OCI-LY7 (cell line): ENCODE measurements at regions of chr5 and their contacts with region 1.

Region 1: GRCh38 chr5:7868773-7869473 is at the starts of genes FASTKD3 and MTRR:
- DNase-seq: peak; percentile 94
- H3K4me3 ChIP-seq: peak within 1 kb of the TSS; percentile 97
- H3K27ac ChIP-seq: peak within 1 kb of the TSS; percentile 55
- H3K4me1 ChIP-seq: peaks cover 64% of the 10 kb centered on the region
- CTCF ChIP-seq: no peak
- total RNA-seq, gene FASTKD3: 12.9 and 14.7 TPM in 2 replicates
- total RNA-seq, gene MTRR: 51.9 and 68.1 TPM in 2 replicates

Region 2: DNA sequence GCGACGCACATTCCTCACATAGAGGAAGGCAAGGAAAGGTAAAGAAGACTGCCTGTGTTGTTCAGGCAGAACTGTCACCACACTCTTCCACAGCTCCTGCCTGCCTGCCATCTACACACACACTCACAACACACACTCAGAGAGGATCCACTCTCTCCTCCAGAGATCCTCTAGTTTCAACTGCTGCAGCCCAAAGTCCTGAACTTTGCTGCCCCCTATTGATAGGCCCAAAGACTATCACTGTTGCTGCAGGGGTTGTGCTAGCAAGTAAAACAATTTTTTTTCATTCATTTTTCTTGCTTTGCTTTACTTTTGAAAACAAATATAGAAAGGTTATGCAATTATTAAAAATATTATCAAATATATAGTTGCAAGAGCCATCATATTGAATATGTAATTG is 12.1 kb before region 1 on chr5:
- CTCF ChIA-PET with region 1: no interaction called
- POLR2A ChIA-PET with region 1: interaction called, 16 read pairs
- intact Hi-C with region 1: no loop called
- DNase-seq: peak; percentile 24
- H3K4me3 ChIP-seq: no peak overlapping the region
- H3K27ac ChIP-seq: no peak overlapping the region
- H3K4me1 ChIP-seq: no peaks in the 10 kb centered on the region
- CTCF ChIP-seq: peak; percentile 72

Region 3: DNA sequence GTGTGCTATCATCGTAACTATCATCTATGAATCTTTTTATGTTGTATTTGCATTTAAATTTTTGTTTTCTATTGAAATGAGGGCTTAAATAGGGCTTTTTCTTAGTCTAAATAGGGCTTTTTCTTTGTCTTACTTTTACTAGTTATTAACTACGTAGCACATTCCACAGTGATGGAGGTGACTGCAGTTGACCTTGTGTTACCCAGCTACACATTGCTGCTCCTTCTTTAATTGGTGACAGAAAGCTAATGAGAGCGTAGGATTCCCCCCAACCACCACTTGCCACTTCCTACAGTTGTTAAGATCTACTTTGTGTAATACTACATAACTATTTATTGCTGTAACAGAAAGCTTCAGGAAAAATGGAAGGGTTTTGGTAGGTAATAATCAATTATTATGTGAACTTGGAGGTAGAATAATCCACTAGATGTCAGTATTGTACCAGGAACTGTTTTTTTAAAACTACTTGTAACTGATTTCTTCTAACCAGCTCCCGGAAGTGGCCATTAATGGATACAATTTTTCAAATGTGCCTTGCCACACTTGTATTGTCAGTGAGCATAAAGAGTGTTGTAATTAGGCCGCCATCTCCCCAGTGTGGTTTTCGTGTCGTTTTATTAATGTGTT is 18.0 kb after region 1 on chr5:
- CTCF ChIA-PET with region 1: interaction called, 8 read pairs
- POLR2A ChIA-PET with region 1: interaction called, 15 read pairs
- intact Hi-C with region 1: no loop called
- DNase-seq: peak; percentile 41
- H3K4me3 ChIP-seq: no peak overlapping the region
- H3K27ac ChIP-seq: no peak overlapping the region
- H3K4me1 ChIP-seq: no peaks in the 10 kb centered on the region
- CTCF ChIP-seq: peak; percentile 78